Breast epithelium (tissue), 4 donors: ENCODE measurements at regions of chr17 and their contacts with region 1.

Region 1: DNA sequence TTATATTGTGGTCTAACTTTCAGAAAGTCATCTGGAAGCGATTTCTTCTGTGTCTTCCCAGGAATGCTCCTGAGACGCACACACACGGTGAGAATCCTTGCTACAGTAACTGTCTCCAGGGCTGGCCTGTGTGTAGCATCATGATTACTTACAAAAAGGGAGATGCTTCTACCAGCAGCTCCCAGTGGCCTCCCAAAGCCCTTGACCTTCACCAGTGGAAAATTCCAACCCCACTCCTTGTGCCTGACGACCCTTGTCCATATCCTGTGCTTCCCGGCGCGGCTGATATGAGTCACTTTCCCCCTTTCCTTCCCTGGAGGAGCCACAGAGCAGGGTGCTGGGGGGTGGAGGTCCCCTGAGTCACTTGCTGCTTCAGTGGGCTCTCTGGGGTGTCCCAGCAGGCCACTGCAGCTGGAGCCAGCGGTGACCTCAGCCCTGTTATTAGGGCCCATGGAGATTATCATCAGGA is 22.1 kb upstream of the NAT9 start:
- DNase-seq: no peak
- H3K4me3 ChIP-seq: no peak overlapping the region
- H3K27ac ChIP-seq: no peak overlapping the region
- H3K4me1 ChIP-seq: no peaks in the 10 kb centered on the region
- H3K27me3 ChIP-seq: no peaks in the 10 kb centered on the region
- CTCF ChIP-seq: no peak
- POLR2A ChIP-seq: no peak

Region 2: GRCh38 chr17:74830861-74831260 is 32.6 kb after region 1 on chr17:
- intact Hi-C with region 1: loop called (anchors 1 kb)
- DNase-seq: no peak
- H3K4me3 ChIP-seq: no peak overlapping the region
- H3K27ac ChIP-seq: no peak overlapping the region
- H3K4me1 ChIP-seq: no peaks in the 10 kb centered on the region
- H3K27me3 ChIP-seq: no peaks in the 10 kb centered on the region
- CTCF ChIP-seq: no peak
- POLR2A ChIP-seq: no peak

Region 3: GRCh38 chr17:74864866-74865395 is 66.7 kb after region 1 on chr17:
- intact Hi-C with region 1: loop called (anchors 10 kb)
- DNase-seq: peak; percentile 68 to 80
- H3K4me3 ChIP-seq: no peak overlapping the region
- H3K27ac ChIP-seq: no peak overlapping the region
- H3K4me1 ChIP-seq: peaks cover 13 to 18% of the 10 kb centered on the region in 2 donors
- H3K27me3 ChIP-seq: peaks cover 8 to 19% of the 10 kb centered on the region in 2 donors
- CTCF ChIP-seq: peak; percentile 90 to 97 (median 95)
- POLR2A ChIP-seq: no peak